ENCODE measurements at regions of chr3 and their contacts with region 1.

Region 1: DNA sequence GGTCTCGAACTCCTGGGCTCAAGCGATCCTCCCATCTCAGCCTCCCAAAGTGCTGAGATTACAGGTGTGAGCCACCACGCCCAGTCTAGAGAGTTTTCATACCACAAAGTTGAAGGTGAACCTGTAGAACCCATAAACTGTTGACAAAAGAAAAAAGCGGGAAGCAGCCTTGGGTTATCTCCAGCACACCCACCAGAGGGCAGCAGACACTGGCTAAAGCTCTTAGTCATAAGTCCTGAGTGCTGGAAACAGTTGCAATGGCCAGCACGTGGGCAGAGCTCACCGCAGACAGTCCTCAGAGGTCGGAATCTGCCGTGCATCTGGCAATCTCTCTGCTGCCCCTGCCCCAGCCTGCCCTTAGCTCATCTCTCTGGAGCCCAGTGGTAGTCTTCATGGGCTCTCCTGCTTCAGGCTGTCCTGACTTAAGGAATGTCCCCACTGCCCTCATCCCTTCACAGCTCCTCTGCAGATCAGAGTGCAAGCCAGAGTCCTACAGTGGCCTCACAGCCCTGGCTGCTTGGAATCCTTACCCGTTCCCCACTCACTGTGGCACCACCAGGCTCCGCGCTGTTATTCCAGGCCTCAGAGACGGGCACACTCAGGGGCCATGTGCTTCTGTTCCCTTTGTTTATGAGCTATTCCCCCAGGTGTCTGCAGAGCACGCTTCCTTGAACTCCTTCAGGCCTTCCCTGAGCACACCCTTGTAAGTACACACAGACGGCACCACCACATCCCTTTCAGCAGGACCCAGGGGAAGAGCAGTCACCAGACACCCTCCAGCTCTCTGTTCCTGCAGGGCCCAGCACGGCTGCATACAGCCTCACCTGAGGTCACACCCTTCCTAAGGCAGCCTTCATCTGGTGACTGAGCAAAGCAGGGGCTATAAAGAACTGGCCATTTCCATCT is 8.8 kb upstream of the ELP6 start:
- DNase-seq: no peak
- H3K4me3 ChIP-seq: no peak overlapping the region
- H3K27ac ChIP-seq: no peak overlapping the region
- H3K4me1 ChIP-seq: peaks cover 0 to 17% (median 3%) of the 10 kb centered on the region in 3 donors
- H3K27me3 ChIP-seq: no peaks in the 10 kb centered on the region
- CTCF ChIP-seq: peak; percentile 87 to 96 (median 92)
- POLR2A ChIP-seq: no peak

Region 2: DNA sequence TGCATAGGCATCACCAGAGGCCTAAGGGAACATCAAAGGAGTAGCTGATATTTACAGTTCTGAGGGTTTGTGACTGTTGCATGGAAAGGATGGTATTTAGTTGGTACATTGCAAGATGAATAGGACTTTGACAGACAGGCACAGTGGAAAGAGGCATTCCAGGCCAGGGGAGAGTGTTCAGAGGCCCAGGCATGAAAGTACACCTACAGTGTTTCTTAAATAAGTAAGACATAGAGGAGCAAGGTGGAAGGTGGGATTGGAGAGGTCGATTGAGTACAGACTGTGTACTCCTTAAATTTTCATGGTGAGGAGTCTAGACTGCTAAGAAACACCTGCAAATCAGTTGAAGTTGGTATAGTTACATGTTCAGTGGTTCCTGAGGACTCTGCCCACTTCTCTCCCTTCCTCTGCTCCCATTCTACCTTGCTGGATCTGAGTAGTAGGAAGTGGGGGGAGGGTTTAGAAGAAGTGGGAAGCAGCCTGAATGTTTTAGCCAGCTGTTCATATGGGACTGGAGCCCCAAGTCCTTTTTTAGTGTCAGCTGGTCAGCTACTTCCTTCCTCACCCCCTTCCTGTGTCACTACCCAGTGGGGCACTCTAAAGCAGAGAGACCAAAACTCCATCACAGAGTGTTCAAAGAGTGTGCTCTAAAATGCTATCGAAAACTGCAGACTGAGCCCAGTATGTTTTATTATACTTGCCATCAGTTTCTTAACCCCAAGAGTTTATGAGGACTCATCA is 225.6 kb before region 1 on chr3:
- intact Hi-C with region 1: no loop called
- DNase-seq: no peak
- H3K4me3 ChIP-seq: no peak overlapping the region
- H3K27ac ChIP-seq: no peak overlapping the region
- H3K4me1 ChIP-seq: peaks cover 0 to 10% (median 5%) of the 10 kb centered on the region in 3 donors
- H3K27me3 ChIP-seq: no peaks in the 10 kb centered on the region
- CTCF ChIP-seq: no peak
- POLR2A ChIP-seq: no peak

Region 3: DNA sequence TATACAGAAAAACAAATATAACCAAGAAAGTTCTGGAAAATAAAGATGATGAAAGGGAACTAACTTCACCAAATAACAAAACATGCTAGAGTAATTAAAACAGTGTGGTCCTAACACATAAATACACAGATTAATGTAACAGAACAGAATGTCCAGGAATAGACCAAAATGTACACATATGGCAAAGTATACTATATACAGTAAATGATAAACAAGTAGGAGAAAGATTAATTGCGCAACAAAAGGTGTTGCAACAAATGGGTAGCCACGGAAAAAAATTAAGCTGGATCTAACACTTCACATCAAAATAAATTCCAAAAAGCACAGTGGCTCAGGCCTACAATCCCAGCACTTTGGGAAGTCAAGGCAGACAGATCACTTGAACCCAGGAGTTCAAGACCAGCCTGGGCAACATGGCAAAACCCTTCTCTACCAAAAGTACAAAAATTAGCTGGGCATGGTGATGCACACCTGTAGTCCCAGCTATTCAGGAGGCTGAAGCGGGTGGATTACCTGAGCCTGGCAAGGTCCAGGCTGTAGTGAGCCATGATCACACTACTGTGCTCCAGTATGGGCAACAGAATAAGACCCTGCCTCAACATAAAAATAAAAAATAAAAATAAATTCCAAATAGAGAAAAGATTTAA is 66.4 kb before region 1 on chr3:
- intact Hi-C with region 1: no loop called
- DNase-seq: no peak
- H3K4me3 ChIP-seq: no peak overlapping the region
- H3K27ac ChIP-seq: peak overlapping the region in 3 of 4 donors; percentile 41 to 69 (median 51)
- H3K4me1 ChIP-seq: peaks cover 0 to 53% (median 23%) of the 10 kb centered on the region in 3 donors
- H3K27me3 ChIP-seq: no peaks in the 10 kb centered on the region
- CTCF ChIP-seq: no peak
- POLR2A ChIP-seq: no peak

Region 4: DNA sequence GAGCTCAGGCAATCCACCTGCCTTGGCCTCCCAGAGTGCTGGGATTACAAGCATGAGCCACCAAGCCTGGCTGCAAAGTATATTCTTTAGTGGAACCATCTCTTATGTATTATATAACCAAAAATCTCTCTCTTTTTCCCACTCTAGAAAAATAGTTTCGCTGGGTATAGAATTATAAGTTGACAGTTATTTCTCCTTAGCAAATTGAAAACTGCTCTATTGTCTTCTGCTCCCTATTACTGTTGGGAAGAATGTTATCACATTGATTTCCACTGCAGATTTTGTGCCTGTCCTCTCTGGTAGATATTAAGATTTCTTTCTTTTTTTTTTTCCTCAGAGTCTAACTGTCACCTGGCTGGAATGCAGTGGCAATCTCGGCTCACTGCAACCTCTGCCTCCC is 270.4 kb after region 1 on chr3:
- intact Hi-C with region 1: loop called (anchors 2 kb)
- DNase-seq: no peak
- H3K4me3 ChIP-seq: no peak overlapping the region
- H3K27ac ChIP-seq: no peak overlapping the region
- H3K4me1 ChIP-seq: peaks cover 0 to 12% (median 0%) of the 10 kb centered on the region in 3 donors
- H3K27me3 ChIP-seq: no peaks in the 10 kb centered on the region
- CTCF ChIP-seq: no peak
- POLR2A ChIP-seq: no peak

Measured in esophagus squamous epithelium (tissue), 5 donors.